ENCODE measurements at regions of chr20 and their contacts with region 1.

Region 1: GRCh38 chr20:49803418-49803817 is 9.2 kb upstream of the SLC9A8 start:
- DNase-seq: no peak
- ATAC-seq: no peak
- H3K4me3 ChIP-seq: no peak overlapping the region
- H3K27ac ChIP-seq: no peak overlapping the region
- H3K4me1 ChIP-seq: peaks cover 43% of the 10 kb centered on the region
- H3K27me3 ChIP-seq: no peaks in the 10 kb centered on the region
- CTCF ChIP-seq: no peak
- EP300 ChIP-seq: no peak
- POLR2A ChIP-seq: no peak
- RAD21 ChIP-seq: no peak

Region 2: GRCh38 chr20:49620364-49621240 is 182.8 kb before region 1 on chr20:
- CTCF ChIA-PET with region 1: interaction called, 3 read pairs
- POLR2A ChIA-PET with region 1: interaction called, 3 read pairs
- RAD21 ChIA-PET with region 1: interaction called, 12 read pairs
- SMC1A ChIA-PET with region 1: interaction called, 10 read pairs
- in situ Hi-C with region 1: no loop called
- intact Hi-C with region 1: loop called (anchors 5 kb)
- DNase-seq: peak; percentile 100
- ATAC-seq: peak; percentile 92
- H3K4me3 ChIP-seq: peak overlapping the region; percentile 8; the same call in 1 of the 2 replicates
- H3K27ac ChIP-seq: peak overlapping the region; percentile 57
- H3K4me1 ChIP-seq: peaks cover 37% of the 10 kb centered on the region
- H3K27me3 ChIP-seq: no peaks in the 10 kb centered on the region
- CTCF ChIP-seq: no peak
- EP300 ChIP-seq: peak; percentile 91 to 92
- POLR2A ChIP-seq: no peak
- RAD21 ChIP-seq: peak; percentile 17; the same call in 1 of the 2 replicates

Region 3: GRCh38 chr20:49821870-49822331 is 18.5 kb after region 1 on chr20:
- CTCF ChIA-PET with region 1: interaction called, 11 read pairs
- POLR2A ChIA-PET with region 1: interaction called, 8 read pairs
- RAD21 ChIA-PET with region 1: interaction called, 15 read pairs
- SMC1A ChIA-PET with region 1: interaction called, 10 read pairs
- in situ Hi-C with region 1: no loop called
- intact Hi-C with region 1: no loop called
- DNase-seq: no peak
- ATAC-seq: peak; percentile 68
- H3K4me3 ChIP-seq: no peak overlapping the region
- H3K27ac ChIP-seq: 0 out of 2 replicates have a peak overlapping the region, but pooled peaks have one; percentile 14
- H3K4me1 ChIP-seq: peaks cover 22% of the 10 kb centered on the region
- H3K27me3 ChIP-seq: no peaks in the 10 kb centered on the region
- CTCF ChIP-seq: peak; percentile 34 to 55 (median 39); a peak in 5 of 6 replicates
- EP300 ChIP-seq: 0 out of 4 replicates have a peak, but pooled peaks of 1 of the 2 experiments have one; percentile 18
- POLR2A ChIP-seq: no peak
- RAD21 ChIP-seq: peak; percentile 61